PC-3 (cell line): ENCODE measurements at regions of chr3 and their contacts with region 1.

Region 1: GRCh38 chr3:189563866-189564563 is 67.2 kb upstream of the TP63 start:
- DNase-seq: peak; percentile 97
- ATAC-seq: peak; percentile 96
- H3K4me3 ChIP-seq: peak overlapping the region; percentile 28; the same call in 1 of the 2 replicates
- H3K27ac ChIP-seq: peak overlapping the region; percentile 66
- H3K4me1 ChIP-seq: peaks cover 23% of the 10 kb centered on the region
- H3K27me3 ChIP-seq: no peaks in the 10 kb centered on the region
- CTCF ChIP-seq: no peak; the same call in 1 of the 2 replicates

Region 2: DNA sequence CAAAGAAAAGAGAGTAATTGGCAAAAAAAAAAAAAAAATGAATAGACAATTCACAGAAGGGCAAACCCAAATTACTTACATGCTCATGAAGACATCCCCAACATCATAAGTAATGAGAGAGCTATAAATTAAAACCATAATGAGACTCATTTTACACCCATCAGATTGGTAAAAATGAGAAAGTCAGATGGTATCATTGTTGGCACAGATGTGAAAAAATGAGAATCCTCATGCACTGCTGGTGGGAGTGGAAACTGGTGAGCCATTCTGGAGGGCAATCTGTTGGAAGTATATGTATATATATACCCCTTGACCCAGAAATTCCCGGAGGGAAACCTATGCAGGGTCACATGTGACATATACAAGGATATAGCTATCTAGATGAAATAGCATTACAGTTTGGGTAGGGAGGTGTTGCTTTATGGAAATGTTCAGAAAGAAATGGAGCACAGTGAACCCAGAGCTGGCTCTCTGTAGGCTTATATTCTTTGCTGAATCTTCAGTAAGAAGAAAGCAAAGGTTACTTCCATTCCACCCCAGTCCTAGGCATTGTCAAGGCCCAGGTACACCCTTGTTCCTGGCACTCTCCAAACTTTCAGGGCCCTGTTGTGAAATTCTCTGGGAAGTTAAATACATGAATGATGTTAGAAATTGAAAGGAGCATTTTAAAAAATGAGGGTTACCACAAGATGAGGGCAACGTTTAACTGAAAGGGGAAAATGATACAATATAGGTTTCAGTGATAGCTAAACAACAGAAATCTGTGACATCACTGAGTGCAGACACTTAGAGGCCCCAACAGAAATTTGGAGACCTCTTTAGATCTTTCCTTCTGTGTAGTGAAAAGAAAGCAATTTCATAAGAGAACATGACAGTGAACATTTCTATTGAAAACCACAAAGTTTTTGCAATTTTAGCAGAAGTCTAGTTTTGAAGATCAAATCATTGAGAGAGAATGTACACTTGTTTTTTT is 525.0 kb before region 1 on chr3:
- CTCF ChIA-PET with region 1: no interaction called
- POLR2A ChIA-PET with region 1: no interaction called
- intact Hi-C with region 1: no loop called
- DNase-seq: no peak
- ATAC-seq: no peak
- H3K4me3 ChIP-seq: no peak overlapping the region
- H3K27ac ChIP-seq: no peak overlapping the region
- H3K4me1 ChIP-seq: no peaks in the 10 kb centered on the region
- H3K27me3 ChIP-seq: no peaks in the 10 kb centered on the region
- CTCF ChIP-seq: no peak

Region 3: GRCh38 chr3:189394599-189395121 is 169.4 kb before region 1 on chr3:
- CTCF ChIA-PET with region 1: no interaction called
- POLR2A ChIA-PET with region 1: no interaction called
- intact Hi-C with region 1: loop called (anchors 2 kb)
- DNase-seq: no peak
- ATAC-seq: no peak
- H3K4me3 ChIP-seq: no peak overlapping the region
- H3K27ac ChIP-seq: no peak overlapping the region
- H3K4me1 ChIP-seq: peaks cover 20% of the 10 kb centered on the region
- H3K27me3 ChIP-seq: no peaks in the 10 kb centered on the region
- CTCF ChIP-seq: no peak

Region 4: GRCh38 chr3:189512039-189512438 is 52.0 kb before region 1 on chr3:
- CTCF ChIA-PET with region 1: no interaction called
- POLR2A ChIA-PET with region 1: no interaction called
- intact Hi-C with region 1: loop called (anchors 2 kb)
- DNase-seq: no peak
- ATAC-seq: no peak
- H3K4me3 ChIP-seq: no peak overlapping the region
- H3K27ac ChIP-seq: peak overlapping the region; percentile 82; the same call in 1 of the 2 replicates
- H3K4me1 ChIP-seq: peaks cover 21% of the 10 kb centered on the region
- H3K27me3 ChIP-seq: no peaks in the 10 kb centered on the region
- CTCF ChIP-seq: no peak

Region 5: GRCh38 chr3:189529468-189529867 is 34.5 kb before region 1 on chr3:
- CTCF ChIA-PET with region 1: no interaction called
- POLR2A ChIA-PET with region 1: no interaction called
- intact Hi-C with region 1: no loop called
- DNase-seq: no peak
- ATAC-seq: no peak
- H3K4me3 ChIP-seq: no peak overlapping the region
- H3K27ac ChIP-seq: no peak overlapping the region
- H3K4me1 ChIP-seq: 0 out of 2 replicates have a peak, but pooled peaks cover 9% of the 10 kb centered on the region
- H3K27me3 ChIP-seq: no peaks in the 10 kb centered on the region
- CTCF ChIP-seq: no peak

Region 6: GRCh38 chr3:189685854-189686253 is 121.8 kb after region 1 on chr3:
- CTCF ChIA-PET with region 1: interaction called, 3 read pairs
- POLR2A ChIA-PET with region 1: no interaction called
- intact Hi-C with region 1: loop called (anchors 5 kb)
- DNase-seq: peak; percentile 97
- ATAC-seq: peak; percentile 97
- H3K4me3 ChIP-seq: peak overlapping the region; percentile 32; the same call in 1 of the 2 replicates
- H3K27ac ChIP-seq: peak overlapping the region; percentile 96
- H3K4me1 ChIP-seq: peaks cover 44% of the 10 kb centered on the region
- H3K27me3 ChIP-seq: no peaks in the 10 kb centered on the region
- CTCF ChIP-seq: no peak

Region 7: DNA sequence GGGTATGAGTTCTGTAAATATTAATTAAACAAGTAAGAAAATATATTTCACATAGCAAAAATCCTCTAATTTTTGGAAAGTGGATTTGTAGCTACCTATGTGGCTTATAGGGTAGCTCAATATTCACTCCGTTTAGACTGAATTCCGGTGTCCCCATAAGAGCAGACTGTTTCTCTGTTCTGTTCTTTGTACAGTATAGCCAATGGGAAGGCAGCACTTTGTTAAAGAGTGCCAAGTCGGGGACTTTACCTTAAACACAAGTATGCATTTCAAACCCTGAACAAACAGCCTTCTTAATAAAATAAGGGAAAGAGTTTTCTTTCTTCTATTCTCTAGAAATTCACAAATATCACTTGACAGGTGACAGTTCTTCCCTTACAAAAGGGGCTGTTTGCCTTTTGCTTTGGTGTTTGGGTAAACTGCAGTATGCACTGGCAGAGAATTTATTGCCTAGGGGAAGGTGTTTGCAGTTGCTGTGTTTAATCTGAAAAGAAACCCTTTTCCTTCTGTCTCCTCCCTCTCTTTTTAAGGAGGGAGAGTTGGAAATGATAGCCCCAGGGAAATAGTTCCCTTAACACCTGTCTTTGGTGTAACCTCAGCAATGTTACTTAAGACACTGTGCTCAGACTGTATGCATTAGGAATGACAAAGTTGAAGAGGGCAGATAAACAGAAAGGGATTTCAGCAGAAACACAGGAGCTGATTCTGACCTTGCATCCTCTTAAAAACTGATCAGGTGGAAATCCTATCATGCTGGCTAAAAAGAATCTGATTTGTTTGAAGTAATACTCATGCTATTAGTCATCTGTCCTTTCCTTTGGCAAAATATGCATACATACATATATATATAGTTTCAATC is 192.4 kb after region 1 on chr3:
- CTCF ChIA-PET with region 1: no interaction called
- POLR2A ChIA-PET with region 1: no interaction called
- intact Hi-C with region 1: loop called (anchors 2 kb)
- DNase-seq: peak; percentile 96
- ATAC-seq: peak; percentile 94
- H3K4me3 ChIP-seq: peak overlapping the region; percentile 23; the same call in 1 of the 2 replicates
- H3K27ac ChIP-seq: peak overlapping the region; percentile 48
- H3K4me1 ChIP-seq: peaks cover 32% of the 10 kb centered on the region
- H3K27me3 ChIP-seq: no peaks in the 10 kb centered on the region
- CTCF ChIP-seq: no peak